Posterior cingulate gyrus (tissue), 11 donors: ENCODE measurements at regions of chr2 and their contacts with region 1.

Region 1: GRCh38 chr2:163345908-163346573 is 389.8 kb downstream of the FIGN start:
- DNase-seq: peak in 1 of 10 donors; percentile 43

Region 2: GRCh38 chr2:163465440-163465839 is 119.4 kb after region 1 on chr2:
- intact Hi-C with region 1: loop called (anchors 10 kb)
- DNase-seq: no peak

Region 3: DNA sequence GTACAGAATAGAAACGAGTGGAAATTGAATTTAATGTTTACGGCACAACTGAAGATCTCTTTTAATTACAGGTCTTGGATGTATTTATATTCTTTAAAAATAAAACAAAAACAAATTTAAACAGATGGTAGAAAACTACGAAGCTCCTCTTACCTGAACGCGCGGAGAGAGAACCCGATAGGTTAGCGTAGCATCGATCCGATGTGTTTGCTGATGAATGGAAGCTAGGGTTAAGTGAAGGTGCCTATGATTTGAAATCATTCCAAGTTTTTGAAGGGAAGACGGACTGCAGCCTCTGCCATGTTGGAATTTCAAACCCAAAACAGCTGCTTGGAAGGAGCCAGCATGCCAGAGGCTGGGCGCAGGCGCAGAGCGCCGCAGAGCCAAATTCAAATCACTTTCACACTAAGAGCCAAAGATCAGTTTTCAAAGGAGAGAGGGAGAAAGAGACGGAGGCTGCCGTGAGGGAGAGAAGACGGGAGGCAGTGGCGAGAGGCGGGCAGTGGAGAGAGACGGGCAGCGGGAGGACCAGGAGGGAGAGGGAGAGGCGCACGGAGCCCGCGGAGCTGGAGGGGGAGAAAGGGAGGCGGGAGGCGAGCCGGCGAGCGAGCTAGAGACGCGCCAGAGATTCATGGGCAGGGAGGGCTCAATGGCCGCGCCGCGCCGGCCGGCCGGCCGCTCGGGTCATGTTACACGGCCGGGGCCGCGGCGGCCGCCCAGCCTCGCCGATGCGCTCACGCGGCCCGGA is 389.8 kb after region 1 on chr2 and contains the start of gene FIGN:
- intact Hi-C with region 1: loop called (anchors 5 kb)
- DNase-seq: peak; percentile 69 to 97 (median 76)

Region 4: GRCh38 chr2:164061129-164061746 is 715.2 kb after region 1 on chr2:
- intact Hi-C with region 1: loop called (anchors 2 kb)
- DNase-seq: peak in 4 of 10 donors; percentile 18 to 57 (median 40)

Region 5: GRCh38 chr2:164495491-164496223 is 1149.6 kb after region 1 on chr2:
- intact Hi-C with region 1: loop called (anchors 5 kb)
- DNase-seq: peak in 3 of 10 donors; percentile 8 to 58 (median 21)